B cell (primary cell): ENCODE measurements at regions of chr5 and their contacts with region 1.

Region 1: GRCh38 chr5:150560401-150561193 is 52.7 kb downstream of the NDST1 start:
- DNase-seq: peak; percentile 87
- ATAC-seq: peak; percentile 96
- H3K4me3 ChIP-seq: no peak overlapping the region
- H3K4me3 Mint-ChIP-seq: no peak overlapping the region
- H3K27ac ChIP-seq: no peak overlapping the region
- H3K27ac Mint-ChIP-seq: no peak overlapping the region
- H3K4me1 ChIP-seq: peaks cover 5 to 6% of the 10 kb centered on the region in 2 donors
- H3K4me1 Mint-ChIP-seq: peaks cover 5% of the 10 kb centered on the region
- H3K27me3 ChIP-seq: no peaks in the 10 kb centered on the region
- H3K27me3 Mint-ChIP-seq: no peaks in the 10 kb centered on the region
- CTCF ChIP-seq: peak; percentile 93

Region 2: GRCh38 chr5:150458819-150459557 is 101.6 kb before region 1 on chr5:
- CTCF ChIA-PET with region 1: interaction called, 36 read pairs
- POLR2A ChIA-PET with region 1: no interaction called
- intact Hi-C with region 1: no loop called
- DNase-seq: peak; percentile 86
- ATAC-seq: peak; percentile 92
- H3K4me3 ChIP-seq: peak overlapping the region in 1 of 5 experiments; percentile 17
- H3K4me3 Mint-ChIP-seq: peak overlapping the region; percentile 32
- H3K27ac ChIP-seq: no peak overlapping the region
- H3K27ac Mint-ChIP-seq: peak overlapping the region; percentile 63
- H3K4me1 ChIP-seq: peaks cover 31 to 44% of the 10 kb centered on the region in 2 donors
- H3K4me1 Mint-ChIP-seq: peaks cover 39% of the 10 kb centered on the region
- H3K27me3 ChIP-seq: no peaks in the 10 kb centered on the region
- H3K27me3 Mint-ChIP-seq: no peaks in the 10 kb centered on the region
- CTCF ChIP-seq: peak; percentile 81

Region 3: DNA sequence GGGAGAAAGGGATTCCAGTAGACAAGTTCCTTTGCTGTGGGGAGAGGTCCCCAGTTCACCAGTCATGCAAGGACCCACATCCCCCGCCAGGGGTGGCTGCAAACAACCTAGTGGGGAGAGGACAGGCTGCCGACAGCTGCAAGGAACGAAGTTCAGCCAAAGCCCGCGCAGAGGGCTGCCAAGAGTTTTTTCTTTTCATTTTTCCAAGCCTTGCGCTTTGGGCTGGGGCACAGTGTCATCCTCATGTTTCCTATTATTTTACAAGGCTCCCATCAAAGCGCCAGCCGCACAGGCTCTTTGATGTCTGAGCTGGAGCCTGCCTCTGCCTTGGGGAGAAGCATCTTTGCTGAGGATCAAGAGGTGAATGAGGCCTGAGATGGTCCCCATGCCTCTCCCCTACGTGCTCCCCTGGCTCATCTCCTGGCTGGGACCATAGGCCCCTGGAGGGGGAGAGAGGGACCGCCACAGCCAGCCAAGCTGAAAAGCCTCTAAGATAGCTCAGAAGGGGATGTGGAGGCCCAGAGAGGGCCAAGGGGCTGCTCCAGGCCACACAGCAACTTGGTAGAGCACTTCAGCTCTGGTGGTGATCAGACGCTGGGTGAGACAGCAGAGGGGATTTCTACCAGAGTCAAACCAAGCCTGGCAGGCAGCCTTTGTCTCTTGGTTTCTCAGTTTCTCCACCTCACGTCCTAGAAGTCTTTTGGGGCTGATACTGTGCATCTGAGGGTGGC is 29.4 kb after region 1 on chr5:
- CTCF ChIA-PET with region 1: no interaction called
- POLR2A ChIA-PET with region 1: no interaction called
- intact Hi-C with region 1: no loop called
- DNase-seq: no peak
- ATAC-seq: no peak
- H3K4me3 ChIP-seq: no peak overlapping the region
- H3K4me3 Mint-ChIP-seq: no peak overlapping the region
- H3K27ac ChIP-seq: no peak overlapping the region
- H3K27ac Mint-ChIP-seq: no peak overlapping the region
- H3K4me1 ChIP-seq: no peaks in the 10 kb centered on the region
- H3K4me1 Mint-ChIP-seq: no peaks in the 10 kb centered on the region
- H3K27me3 ChIP-seq: peaks cover 0 to 1% (median 0%) of the 10 kb centered on the region in 4 experiments
- H3K27me3 Mint-ChIP-seq: no peaks in the 10 kb centered on the region
- CTCF ChIP-seq: no peak

Region 4: GRCh38 chr5:150624334-150625163 is 64.0 kb after region 1 on chr5:
- CTCF ChIA-PET with region 1: interaction called, 5 read pairs
- POLR2A ChIA-PET with region 1: no interaction called
- intact Hi-C with region 1: loop called (anchors 1 kb)
- DNase-seq: peak; percentile 54
- ATAC-seq: peak; percentile 34
- H3K4me3 ChIP-seq: peak overlapping the region; percentile 46 to 83 (median 75)
- H3K4me3 Mint-ChIP-seq: peak overlapping the region; percentile 93
- H3K27ac ChIP-seq: peak overlapping the region in 1 of 2 donors; percentile 41
- H3K27ac Mint-ChIP-seq: peak overlapping the region; percentile 78
- H3K4me1 ChIP-seq: peaks cover 45 to 48% of the 10 kb centered on the region in 2 donors
- H3K4me1 Mint-ChIP-seq: peaks cover 55% of the 10 kb centered on the region
- H3K27me3 ChIP-seq: no peaks in the 10 kb centered on the region
- H3K27me3 Mint-ChIP-seq: no peaks in the 10 kb centered on the region
- CTCF ChIP-seq: no peak

Region 5: DNA sequence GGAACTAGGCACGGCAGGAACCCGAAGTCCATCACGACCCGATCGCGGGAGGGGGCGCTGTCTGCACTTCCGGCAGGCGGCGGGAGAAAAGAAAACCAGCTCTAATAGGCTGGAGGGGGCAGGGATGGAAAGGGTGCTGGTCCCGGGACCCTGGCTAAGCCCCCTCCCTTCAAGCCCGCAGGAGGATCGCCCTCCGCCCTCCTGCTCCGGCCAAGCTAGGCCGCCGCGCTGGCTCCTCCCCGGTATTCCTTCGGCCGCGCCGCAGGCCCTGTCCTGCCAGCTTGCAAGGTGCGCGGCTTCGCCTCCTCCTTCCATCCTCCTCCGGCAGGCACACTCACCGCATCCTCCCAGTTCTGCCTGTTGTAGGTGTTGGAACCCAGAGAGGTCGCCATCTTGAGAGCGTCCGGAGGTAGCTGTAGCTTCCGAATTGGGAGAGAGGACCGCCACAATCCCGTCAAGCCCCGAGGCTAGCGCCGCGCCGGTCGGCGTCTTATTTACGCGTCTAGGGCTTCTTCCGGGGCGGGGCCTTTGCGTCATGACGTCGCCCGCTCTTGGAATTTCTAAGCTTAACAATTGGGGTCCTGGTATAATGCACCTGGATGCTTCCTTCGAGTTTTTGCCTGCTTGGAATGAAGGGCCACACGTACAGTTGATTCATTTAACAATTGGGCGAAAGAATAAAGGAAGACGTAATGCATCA is 140.1 kb after region 1 on chr5 and contains the start of gene RBM22:
- CTCF ChIA-PET with region 1: interaction called, 14 read pairs
- POLR2A ChIA-PET with region 1: no interaction called
- intact Hi-C with region 1: no loop called
- DNase-seq: peak; percentile 94
- ATAC-seq: peak; percentile 96
- H3K4me3 ChIP-seq: peak within 1 kb of the TSS; percentile 65 to 100 (median 99)
- H3K4me3 Mint-ChIP-seq: no peak within 1 kb of the TSS
- H3K27ac ChIP-seq: peak within 1 kb of the TSS; percentile 96 to 97
- H3K27ac Mint-ChIP-seq: no peak within 1 kb of the TSS
- H3K4me1 ChIP-seq: peaks cover 15 to 17% of the 10 kb centered on the region in 2 donors
- H3K4me1 Mint-ChIP-seq: peaks cover 8% of the 10 kb centered on the region
- H3K27me3 ChIP-seq: no peaks in the 10 kb centered on the region
- H3K27me3 Mint-ChIP-seq: no peaks in the 10 kb centered on the region
- CTCF ChIP-seq: peak; percentile 84
- total RNA-seq, gene RBM22: 88.4 and 89.4 TPM in 2 replicates

Region 6: GRCh38 chr5:150846654-150847333 is 286.2 kb after region 1 on chr5:
- CTCF ChIA-PET with region 1: interaction called, 47 read pairs
- POLR2A ChIA-PET with region 1: no interaction called
- intact Hi-C with region 1: loop called (anchors 1 kb)
- DNase-seq: peak; percentile 84
- ATAC-seq: peak; percentile 97
- H3K4me3 ChIP-seq: peak overlapping the region; percentile 31 to 58 (median 45)
- H3K4me3 Mint-ChIP-seq: peak overlapping the region; percentile 84
- H3K27ac ChIP-seq: no peak overlapping the region
- H3K27ac Mint-ChIP-seq: peak overlapping the region; percentile 54
- H3K4me1 ChIP-seq: peaks cover 4 to 11% of the 10 kb centered on the region in 2 donors
- H3K4me1 Mint-ChIP-seq: peaks cover 8% of the 10 kb centered on the region
- H3K27me3 ChIP-seq: no peaks in the 10 kb centered on the region
- H3K27me3 Mint-ChIP-seq: peaks cover 4% of the 10 kb centered on the region
- CTCF ChIP-seq: peak; percentile 79